HepG2 (cell line): ENCODE measurements at regions of chr6 and their contacts with region 1.

Region 1: DNA sequence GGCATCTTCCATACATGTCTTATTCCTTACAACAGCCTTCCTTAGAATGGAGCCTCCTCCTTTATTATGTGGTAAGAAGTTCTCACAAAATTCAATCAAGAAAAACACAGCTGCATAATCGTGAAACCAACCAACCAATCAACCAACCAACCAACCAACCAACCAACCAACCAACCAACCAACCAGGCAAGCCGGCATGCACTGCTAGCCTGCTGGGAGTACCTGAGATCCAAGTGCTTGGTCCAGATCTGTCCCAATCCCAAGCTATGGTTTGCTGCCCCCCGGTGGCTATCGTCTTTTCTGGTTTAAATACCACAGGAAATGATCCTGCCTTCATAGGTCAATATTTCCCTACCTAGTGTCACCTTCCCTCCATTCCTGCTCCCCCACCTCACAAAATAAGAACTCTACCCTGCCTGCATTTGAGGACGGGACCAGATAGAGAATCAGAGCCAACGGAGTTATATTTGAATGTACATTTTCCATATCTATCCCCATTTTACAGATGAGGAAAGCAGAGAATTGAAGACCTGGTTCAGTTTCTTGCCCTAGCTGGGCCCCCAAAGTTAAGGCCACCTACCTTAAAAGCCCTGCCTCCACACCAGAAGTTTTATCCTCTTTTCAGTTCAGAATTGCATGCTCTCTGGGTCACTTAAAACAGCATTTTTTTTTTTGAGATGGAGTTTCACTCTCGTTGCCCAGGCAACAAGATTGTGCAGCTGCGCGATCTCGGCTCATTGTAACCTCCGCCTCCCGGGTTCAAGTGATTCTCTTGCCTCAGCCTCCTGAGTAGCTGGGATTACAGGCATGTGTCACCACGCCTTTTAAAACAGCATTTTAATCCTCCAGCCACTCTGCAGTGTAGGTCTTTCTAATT is 27.1 kb downstream of the RAB44 start:
- DNase-seq: peak; percentile 77
- ATAC-seq: peak; percentile 88
- H3K4me3 ChIP-seq: no peak overlapping the region
- H3K27ac ChIP-seq: no peak overlapping the region
- H3K4me1 ChIP-seq: no peaks in the 10 kb centered on the region
- H3K27me3 ChIP-seq: peaks cover 7 to 45% of the 10 kb centered on the region in 2 experiments; a peak in 3 of 5 replicates
- CTCF ChIP-seq: peak; percentile 93
- EP300 ChIP-seq: no peak
- POLR2A ChIP-seq: no peak
- RAD21 ChIP-seq: peak; percentile 93

Region 2: GRCh38 chr6:36615018-36615761 is 109.6 kb before region 1 on chr6:
- CTCF ChIA-PET with region 1: interaction called, 25 read pairs
- POLR2A ChIA-PET with region 1: no interaction called
- in situ Hi-C with region 1: loop called (anchors 5 kb)
- intact Hi-C with region 1: loop called (anchors 1 kb)
- DNase-seq: peak; percentile 61
- ATAC-seq: peak; percentile 7
- H3K4me3 ChIP-seq: no peak overlapping the region
- H3K27ac ChIP-seq: no peak overlapping the region
- H3K4me1 ChIP-seq: no peaks in the 10 kb centered on the region
- H3K27me3 ChIP-seq: no peaks in the 10 kb centered on the region
- CTCF ChIP-seq: peak; percentile 82
- EP300 ChIP-seq: no peak
- POLR2A ChIP-seq: no peak
- RAD21 ChIP-seq: peak; percentile 72

Region 3: DNA sequence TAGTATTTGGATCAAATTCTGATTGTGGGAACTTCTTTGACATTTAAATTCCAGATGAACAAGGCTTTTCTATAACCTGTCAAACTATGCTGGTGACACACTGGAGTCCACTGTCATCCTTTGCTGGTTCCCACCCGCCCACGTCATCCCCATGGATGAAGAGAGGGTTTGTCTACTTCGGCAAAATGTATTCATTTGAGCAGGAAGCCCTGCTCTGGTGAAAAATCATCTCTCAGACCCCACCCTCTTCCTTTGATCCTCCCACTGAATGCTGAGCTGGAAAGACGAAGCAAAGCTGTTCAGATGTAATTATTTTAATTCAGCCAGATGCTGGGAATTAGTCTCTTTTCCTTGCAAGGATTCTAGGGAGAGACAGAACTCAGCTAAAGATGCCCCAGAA is 64.0 kb after region 1 on chr6:
- CTCF ChIA-PET with region 1: no interaction called
- POLR2A ChIA-PET with region 1: no interaction called
- in situ Hi-C with region 1: no loop called
- intact Hi-C with region 1: no loop called
- DNase-seq: peak; percentile 13
- ATAC-seq: no peak
- H3K4me3 ChIP-seq: no peak overlapping the region
- H3K27ac ChIP-seq: no peak overlapping the region
- H3K4me1 ChIP-seq: no peaks in the 10 kb centered on the region
- H3K27me3 ChIP-seq: peaks cover 10 to 72% of the 10 kb centered on the region in 2 experiments; a peak in 3 of 5 replicates
- CTCF ChIP-seq: no peak
- EP300 ChIP-seq: no peak
- POLR2A ChIP-seq: no peak
- RAD21 ChIP-seq: no peak